Activated naive CD4-positive, alpha-beta T cell treated with anti-CD3 and anti-CD28 coated beads for 36 hours (primary cell): ENCODE measurements at regions of chr14 and their contacts with region 1.

Region 1: GRCh38 chr14:89681086-89682018 is 264.3 kb upstream of the FOXN3 start:
- DNase-seq: peak; percentile 80
- H3K4me3 Mint-ChIP-seq: peak overlapping the region; percentile 44
- H3K27ac Mint-ChIP-seq: peak overlapping the region; percentile 81
- H3K4me1 Mint-ChIP-seq: peaks cover 38% of the 10 kb centered on the region
- H3K27me3 Mint-ChIP-seq: no peaks in the 10 kb centered on the region

Region 2: GRCh38 chr14:89040460-89041259 is 640.7 kb before region 1 on chr14:
- CTCF ChIA-PET with region 1: no interaction called
- intact Hi-C with region 1: loop called (anchors 10 kb)
- DNase-seq: peak; percentile 91
- H3K4me3 Mint-ChIP-seq: peak overlapping the region; percentile 70
- H3K27ac Mint-ChIP-seq: no peak overlapping the region
- H3K4me1 Mint-ChIP-seq: peaks cover 12% of the 10 kb centered on the region
- H3K27me3 Mint-ChIP-seq: peaks cover 8% of the 10 kb centered on the region

Region 3: DNA sequence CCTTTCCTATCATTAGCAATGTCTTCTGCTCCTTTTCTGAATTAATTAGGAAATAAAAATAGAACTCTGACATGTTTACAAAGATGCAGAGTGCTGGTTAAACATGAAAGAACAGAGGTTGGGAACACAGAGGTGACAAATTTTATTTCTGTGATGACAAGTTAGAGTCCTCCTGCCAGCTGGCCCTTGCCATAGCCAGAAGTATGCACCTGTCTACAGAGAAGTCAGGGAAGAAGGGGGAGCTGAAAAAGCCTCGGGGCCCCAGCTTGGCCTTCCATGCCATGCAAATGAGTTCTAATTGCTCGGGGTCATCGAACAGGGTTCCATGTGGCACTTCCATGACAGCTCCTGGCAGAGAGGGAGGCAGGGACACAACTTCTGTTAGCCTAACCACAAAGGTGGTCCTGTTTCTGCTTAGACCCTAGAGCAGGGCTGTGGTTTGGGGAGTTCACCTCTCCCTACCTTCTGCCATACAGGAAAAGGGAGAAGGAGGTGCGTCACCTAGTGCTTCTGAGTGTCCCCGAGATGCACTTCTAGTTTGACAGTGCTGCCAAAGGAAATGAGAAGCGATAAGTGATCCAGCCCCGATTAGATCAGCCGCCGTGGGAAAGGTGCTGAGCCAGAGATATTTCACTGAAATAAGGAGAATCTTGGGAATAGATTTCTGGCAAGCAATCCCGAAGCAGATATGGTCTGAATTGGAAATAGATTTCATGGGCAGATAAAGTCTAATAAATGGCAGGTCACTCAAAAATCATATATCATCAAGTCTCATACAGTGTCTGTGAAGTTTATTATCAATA is 108.6 kb before region 1 on chr14:
- CTCF ChIA-PET with region 1: no interaction called
- intact Hi-C with region 1: no loop called
- DNase-seq: no peak
- H3K4me3 Mint-ChIP-seq: no peak overlapping the region
- H3K27ac Mint-ChIP-seq: no peak overlapping the region
- H3K4me1 Mint-ChIP-seq: peaks cover 36% of the 10 kb centered on the region
- H3K27me3 Mint-ChIP-seq: no peaks in the 10 kb centered on the region

Region 4: DNA sequence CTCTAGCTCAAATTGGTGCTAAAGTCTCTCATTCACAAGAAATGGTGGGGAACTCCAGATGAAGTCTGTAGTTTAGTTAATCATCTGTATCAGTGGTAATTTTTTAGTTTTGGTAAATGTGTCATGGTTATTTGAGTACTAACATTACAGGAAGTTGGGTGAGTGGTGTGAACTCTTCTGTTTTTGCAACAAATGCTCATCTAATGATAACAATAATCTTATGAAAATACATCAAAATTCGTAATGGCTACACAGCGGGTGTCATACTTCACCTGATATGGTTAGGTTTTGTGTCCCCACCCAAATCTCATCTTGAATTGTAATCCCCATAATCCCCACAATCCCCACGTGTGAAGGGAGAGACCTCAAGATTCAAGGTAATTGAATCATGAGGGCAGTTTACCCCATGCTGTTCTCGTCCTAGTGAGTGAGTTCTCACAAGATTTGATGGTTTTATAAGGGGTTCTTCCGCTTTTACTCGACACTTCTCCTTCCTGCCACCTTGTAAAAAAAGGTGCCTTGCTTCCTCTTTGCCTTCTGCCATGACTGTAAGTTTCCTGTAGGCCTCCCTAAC is 55.0 kb before region 1 on chr14:
- CTCF ChIA-PET with region 1: no interaction called
- intact Hi-C with region 1: loop called (anchors 1 kb)
- DNase-seq: peak; percentile 46
- H3K4me3 Mint-ChIP-seq: no peak overlapping the region
- H3K27ac Mint-ChIP-seq: peak overlapping the region; percentile 96
- H3K4me1 Mint-ChIP-seq: peaks cover 79% of the 10 kb centered on the region
- H3K27me3 Mint-ChIP-seq: no peaks in the 10 kb centered on the region

Region 5: GRCh38 chr14:89641495-89642175 is 39.7 kb before region 1 on chr14:
- CTCF ChIA-PET with region 1: interaction called, 5 read pairs
- intact Hi-C with region 1: loop called (anchors 1 kb)
- DNase-seq: peak; percentile 61
- H3K4me3 Mint-ChIP-seq: peak overlapping the region; percentile 57
- H3K27ac Mint-ChIP-seq: peak overlapping the region; percentile 90
- H3K4me1 Mint-ChIP-seq: peaks cover 62% of the 10 kb centered on the region
- H3K27me3 Mint-ChIP-seq: no peaks in the 10 kb centered on the region

Region 6: GRCh38 chr14:89669193-89669592 is 12.2 kb before region 1 on chr14:
- CTCF ChIA-PET with region 1: no interaction called
- intact Hi-C with region 1: loop called (anchors 2 kb)
- DNase-seq: peak; percentile 45
- H3K4me3 Mint-ChIP-seq: no peak overlapping the region
- H3K27ac Mint-ChIP-seq: no peak overlapping the region
- H3K4me1 Mint-ChIP-seq: peaks cover 35% of the 10 kb centered on the region
- H3K27me3 Mint-ChIP-seq: no peaks in the 10 kb centered on the region

Region 7: GRCh38 chr14:89720741-89721315 is 39.5 kb after region 1 on chr14:
- CTCF ChIA-PET with region 1: interaction called, 3 read pairs
- intact Hi-C with region 1: loop called (anchors 1 kb)
- DNase-seq: peak; percentile 76
- H3K4me3 Mint-ChIP-seq: peak overlapping the region; percentile 32
- H3K27ac Mint-ChIP-seq: peak overlapping the region; percentile 95
- H3K4me1 Mint-ChIP-seq: peaks cover 68% of the 10 kb centered on the region
- H3K27me3 Mint-ChIP-seq: no peaks in the 10 kb centered on the region